Activated B cell treated with CpG ODN at 0.5 μM for 24 hours (primary cell): ENCODE measurements at regions of chr12 and their contacts with region 1.

Region 1: GRCh38 chr12:89960011-89960507 is 251.4 kb upstream of the ATP2B1 start:
- DNase-seq: no peak
- ATAC-seq: peak; percentile 92
- H3K4me3 Mint-ChIP-seq: peak overlapping the region; percentile 74
- H3K27ac Mint-ChIP-seq: peak overlapping the region; percentile 85
- H3K4me1 Mint-ChIP-seq: peaks cover 38% of the 10 kb centered on the region
- H3K27me3 Mint-ChIP-seq: no peaks in the 10 kb centered on the region
- CTCF ChIP-seq: no peak

Region 2: DNA sequence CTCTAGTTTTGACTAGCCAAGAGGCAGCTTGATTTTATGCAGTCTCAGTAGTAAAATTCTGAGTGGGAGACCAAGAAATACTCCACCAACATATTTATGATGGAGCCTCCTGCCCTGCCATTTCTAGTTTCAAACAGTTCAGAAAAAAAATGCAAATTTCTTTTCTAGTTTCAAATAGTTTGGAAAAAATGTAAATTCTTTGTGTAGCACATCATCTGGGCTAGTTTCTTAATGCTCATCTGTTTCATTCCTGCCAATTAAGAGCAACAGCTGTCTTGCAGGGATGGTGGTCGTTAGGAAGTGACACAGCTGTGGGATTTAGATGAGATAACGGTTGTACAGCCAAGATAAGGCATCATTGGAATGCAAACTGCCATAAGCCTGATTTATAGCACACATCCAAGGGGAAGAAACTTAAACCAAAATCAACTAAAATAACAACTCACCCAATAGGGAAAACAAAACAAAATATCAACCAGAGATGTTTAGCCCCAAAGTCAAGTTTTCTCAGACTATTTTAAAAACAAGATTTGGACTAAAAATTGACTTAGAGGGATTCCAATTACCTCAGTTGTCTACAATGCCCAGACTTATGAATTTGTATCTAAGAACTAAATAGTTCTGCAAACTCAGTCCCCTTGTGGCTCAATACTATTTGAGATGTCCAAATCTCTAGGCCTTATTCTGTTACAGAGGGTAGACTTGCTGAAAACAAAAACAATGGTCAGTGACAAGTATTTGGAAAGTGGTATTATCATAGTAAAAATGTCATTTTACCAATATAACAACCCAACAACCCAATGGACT is 39.8 kb after region 1 on chr12:
- CTCF ChIA-PET with region 1: no interaction called
- POLR2A ChIA-PET with region 1: no interaction called
- intact Hi-C with region 1: loop called (anchors 5 kb)
- DNase-seq: no peak
- ATAC-seq: no peak
- H3K4me3 Mint-ChIP-seq: no peak overlapping the region
- H3K27ac Mint-ChIP-seq: no peak overlapping the region
- H3K4me1 Mint-ChIP-seq: peaks cover 22% of the 10 kb centered on the region
- H3K27me3 Mint-ChIP-seq: no peaks in the 10 kb centered on the region
- CTCF ChIP-seq: no peak